Activated CD4-positive, alpha-beta memory T cell treated with anti-CD3 and anti-CD28 coated beads, Interleukin-2, amount 10 ng/mL, durations not matched to agents 7 days and 5 days (primary cell): ENCODE measurements at regions of chr12 and their contacts with region 1.

Region 1: DNA sequence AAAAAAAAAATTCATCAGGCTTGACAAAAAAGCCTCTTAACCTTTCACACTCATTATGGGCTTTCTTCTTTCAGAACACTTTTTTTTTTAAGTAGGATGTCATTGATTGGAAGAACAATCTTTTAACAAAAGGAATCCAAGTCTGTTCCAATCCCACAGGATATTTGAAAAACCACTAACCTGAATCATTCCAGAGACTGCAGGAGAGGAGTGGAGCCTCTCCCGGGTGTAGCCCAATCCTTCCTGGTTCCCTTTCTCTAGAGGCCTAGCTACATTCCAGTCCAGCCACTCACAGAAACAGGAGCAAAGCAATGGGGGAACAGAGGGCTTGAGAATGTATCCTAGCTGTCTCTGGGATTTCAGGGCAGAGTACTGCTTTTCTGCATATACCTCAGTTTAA is 4.3 kb downstream of the MFAP5 start:
- DNase-seq: no peak
- H3K4me3 Mint-ChIP-seq: no peak overlapping the region
- H3K27ac Mint-ChIP-seq: no peak overlapping the region
- H3K4me1 Mint-ChIP-seq: no peaks in the 10 kb centered on the region
- H3K27me3 Mint-ChIP-seq: peaks cover 21% of the 10 kb centered on the region

Region 2: GRCh38 chr12:8453021-8453513 is 205.3 kb before region 1 on chr12:
- CTCF ChIA-PET with region 1: no interaction called
- POLR2A ChIA-PET with region 1: no interaction called
- DNase-seq: no peak
- H3K4me3 Mint-ChIP-seq: no peak overlapping the region
- H3K27ac Mint-ChIP-seq: no peak overlapping the region
- H3K4me1 Mint-ChIP-seq: no peaks in the 10 kb centered on the region
- H3K27me3 Mint-ChIP-seq: peaks cover 27% of the 10 kb centered on the region

Region 3: DNA sequence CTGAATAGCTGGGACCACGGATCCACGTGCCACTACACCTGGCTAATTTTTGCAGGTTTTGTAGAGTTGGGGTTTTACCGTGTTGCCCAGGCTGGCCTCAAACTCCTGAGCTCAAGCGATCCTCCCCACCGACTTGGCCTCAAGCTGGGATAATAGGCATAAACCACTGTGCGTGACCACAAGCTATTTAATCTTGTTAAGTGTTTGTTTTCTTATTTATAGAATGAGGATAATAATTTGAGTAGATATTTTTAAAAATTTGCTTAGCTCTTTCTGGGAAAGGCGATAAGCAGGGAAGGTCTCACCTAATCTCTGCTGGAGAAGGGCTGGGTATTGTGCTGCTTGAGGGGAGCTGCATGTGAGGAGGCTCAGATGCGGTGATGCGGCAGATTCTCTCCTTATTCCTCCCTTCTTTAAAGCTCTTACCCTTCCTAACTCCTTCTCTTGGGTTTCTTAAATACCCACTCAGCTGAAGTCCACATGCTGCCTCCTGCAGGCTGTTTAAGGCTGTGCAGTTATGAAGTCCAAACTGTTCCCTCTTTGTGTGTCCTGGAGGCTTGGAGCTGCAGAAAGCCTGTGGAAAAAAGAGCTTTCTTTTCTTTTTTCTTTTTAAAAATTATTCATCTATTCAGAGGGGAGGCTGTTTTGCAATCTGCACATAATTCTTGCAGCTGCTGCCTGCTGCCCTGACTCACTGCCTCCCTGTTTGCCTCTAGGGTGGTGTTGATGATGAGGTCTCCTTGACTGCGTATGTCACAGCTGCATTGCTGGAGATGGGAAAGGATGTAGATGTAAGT is 202.0 kb after region 1 on chr12:
- CTCF ChIA-PET with region 1: interaction called, 29 read pairs
- POLR2A ChIA-PET with region 1: no interaction called
- DNase-seq: peak; percentile 24
- H3K4me3 Mint-ChIP-seq: no peak overlapping the region
- H3K27ac Mint-ChIP-seq: no peak overlapping the region
- H3K4me1 Mint-ChIP-seq: no peaks in the 10 kb centered on the region
- H3K27me3 Mint-ChIP-seq: peaks cover 4% of the 10 kb centered on the region

Region 4: GRCh38 chr12:8890313-8891085 is 232.2 kb after region 1 on chr12:
- CTCF ChIA-PET with region 1: interaction called, 19 read pairs
- POLR2A ChIA-PET with region 1: no interaction called
- DNase-seq: peak; percentile 59
- H3K4me3 Mint-ChIP-seq: peak overlapping the region; percentile 71
- H3K27ac Mint-ChIP-seq: no peak overlapping the region
- H3K4me1 Mint-ChIP-seq: peaks cover 3% of the 10 kb centered on the region
- H3K27me3 Mint-ChIP-seq: peaks cover 2% of the 10 kb centered on the region